ENCODE measurements at regions of chr14 and their contacts with region 1.

Region 1: GRCh38 chr14:68816262-68816942 is 23.5 kb upstream of the ZFP36L1 start:
- DNase-seq: peak; percentile 98
- H3K4me3 ChIP-seq: peak overlapping the region; percentile 39 to 47; a peak in 3 of 4 replicates
- H3K27ac ChIP-seq: peak overlapping the region; percentile 80 to 88
- H3K4me1 ChIP-seq: peaks cover 19 to 26% of the 10 kb centered on the region in 2 experiments; a peak in 3 of 4 replicates
- H3K27me3 ChIP-seq: no peaks in the 10 kb centered on the region
- CTCF ChIP-seq: peak; percentile 93
- EP300 ChIP-seq: peak in 1 of 2 experiments; percentile 40; a peak in 1 of 4 replicates
- RAD21 ChIP-seq: peak; percentile 96

Region 2: GRCh38 chr14:67883717-67884116 is 932.7 kb before region 1 on chr14:
- CTCF ChIA-PET with region 1: interaction called, 23 read pairs
- POLR2A ChIA-PET with region 1: no interaction called
- DNase-seq: no peak
- H3K4me3 ChIP-seq: no peak overlapping the region
- H3K27ac ChIP-seq: no peak overlapping the region
- H3K4me1 ChIP-seq: no peaks in the 10 kb centered on the region; a peak in 1 of 4 replicates
- H3K27me3 ChIP-seq: no peaks in the 10 kb centered on the region
- CTCF ChIP-seq: peak; percentile 61
- EP300 ChIP-seq: no peak
- RAD21 ChIP-seq: peak; percentile 52

Region 3: DNA sequence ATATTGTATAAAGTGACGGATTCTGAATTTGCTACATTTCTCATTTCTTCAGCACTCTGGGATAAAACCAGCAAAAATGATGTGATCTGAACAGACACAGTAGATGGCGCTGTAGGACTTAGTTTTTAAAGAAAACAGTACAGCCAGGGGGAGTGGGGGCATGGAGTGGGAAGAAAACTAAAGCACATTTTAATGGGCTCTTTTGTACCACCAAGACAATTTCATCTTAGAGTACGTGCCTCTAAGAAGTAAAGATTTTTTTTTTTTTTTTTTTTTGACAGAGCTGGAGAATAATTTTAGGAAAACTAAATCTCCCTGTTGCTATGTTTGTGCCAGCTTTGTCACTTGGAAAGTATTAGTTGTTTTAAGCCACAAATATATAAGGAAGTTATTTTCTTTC is 872.5 kb before region 1 on chr14:
- CTCF ChIA-PET with region 1: interaction called, 42 read pairs
- POLR2A ChIA-PET with region 1: no interaction called
- DNase-seq: peak; percentile 57
- H3K4me3 ChIP-seq: no peak overlapping the region
- H3K27ac ChIP-seq: peak overlapping the region; percentile 54 to 83; a peak in 3 of 4 replicates
- H3K4me1 ChIP-seq: peaks cover 0 to 28% of the 10 kb centered on the region in 2 experiments; a peak in 3 of 4 replicates
- H3K27me3 ChIP-seq: no peaks in the 10 kb centered on the region
- CTCF ChIP-seq: peak; percentile 82
- EP300 ChIP-seq: peak in 1 of 2 experiments; percentile 42; a peak in 1 of 4 replicates
- RAD21 ChIP-seq: peak; percentile 92

Region 4: GRCh38 chr14:68655911-68656360 is 160.5 kb before region 1 on chr14:
- CTCF ChIA-PET with region 1: interaction called, 11 read pairs
- POLR2A ChIA-PET with region 1: interaction called, 3 read pairs
- DNase-seq: peak; percentile 40
- H3K4me3 ChIP-seq: no peak overlapping the region
- H3K27ac ChIP-seq: peak overlapping the region in 1 of 2 experiments; percentile 91; a peak in 2 of 4 replicates
- H3K4me1 ChIP-seq: peaks cover 10 to 39% of the 10 kb centered on the region in 2 experiments; a peak in 3 of 4 replicates
- H3K27me3 ChIP-seq: no peaks in the 10 kb centered on the region
- CTCF ChIP-seq: no peak
- EP300 ChIP-seq: no peak
- RAD21 ChIP-seq: peak; percentile 55

Region 5: GRCh38 chr14:68795597-68796417 is 20.6 kb before region 1 on chr14:
- CTCF ChIA-PET with region 1: interaction called, 38 read pairs
- POLR2A ChIA-PET with region 1: no interaction called
- DNase-seq: peak; percentile 86
- H3K4me3 ChIP-seq: peak overlapping the region; percentile 60 to 71
- H3K27ac ChIP-seq: peak overlapping the region; percentile 91 to 99
- H3K4me1 ChIP-seq: peaks cover 6 to 21% of the 10 kb centered on the region in 2 experiments; a peak in 3 of 4 replicates
- H3K27me3 ChIP-seq: no peaks in the 10 kb centered on the region
- CTCF ChIP-seq: peak; percentile 52
- EP300 ChIP-seq: no peak
- RAD21 ChIP-seq: no peak

Region 6: GRCh38 chr14:68849413-68849812 is 33.0 kb after region 1 on chr14:
- CTCF ChIA-PET with region 1: interaction called, 27 read pairs
- POLR2A ChIA-PET with region 1: no interaction called
- DNase-seq: no peak
- H3K4me3 ChIP-seq: no peak overlapping the region
- H3K27ac ChIP-seq: no peak overlapping the region
- H3K4me1 ChIP-seq: peaks cover 0 to 4% of the 10 kb centered on the region in 2 experiments; a peak in 1 of 4 replicates
- H3K27me3 ChIP-seq: no peaks in the 10 kb centered on the region
- CTCF ChIP-seq: no peak
- EP300 ChIP-seq: no peak
- RAD21 ChIP-seq: no peak

Measured in SK-N-SH (cell line).